HEK293 (cell line): ENCODE measurements at regions of chr17 and their contacts with region 1.

Region 1: GRCh38 chr17:58560511-58560910 is 46.1 kb upstream of the MTMR4 start:
- H3K4me3 ChIP-seq: no peak overlapping the region
- H3K27ac ChIP-seq: no peak overlapping the region
- H3K4me1 ChIP-seq: no peaks in the 10 kb centered on the region; the same call in 1 of the 2 replicates
- CTCF ChIP-seq: no peak

Region 2: DNA sequence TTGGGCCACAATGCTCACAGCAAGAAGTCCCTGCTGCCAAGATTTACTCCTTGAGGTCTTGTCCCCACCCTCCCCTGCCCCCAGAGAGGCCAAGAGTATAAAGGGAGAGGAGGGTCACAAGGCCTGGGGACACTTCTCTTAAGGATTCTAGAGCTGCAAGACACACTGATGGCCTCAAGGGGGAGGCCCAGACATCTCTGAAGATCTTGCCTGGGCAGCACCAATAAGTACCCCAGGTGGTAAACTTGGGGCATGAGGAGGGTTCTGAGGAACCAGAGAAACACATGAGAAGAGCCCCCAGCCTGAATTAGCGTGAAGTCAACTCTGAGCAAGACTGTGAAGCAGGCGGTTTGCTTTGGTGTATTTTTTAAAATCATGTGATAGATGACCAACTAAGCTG is 19.3 kb before region 1 on chr17:
- CTCF ChIA-PET with region 1: interaction called, 15 read pairs
- POLR2A ChIA-PET with region 1: no interaction called
- H3K4me3 ChIP-seq: no peak overlapping the region
- H3K27ac ChIP-seq: no peak overlapping the region
- H3K4me1 ChIP-seq: no peaks in the 10 kb centered on the region
- CTCF ChIP-seq: no peak

Region 3: GRCh38 chr17:58621174-58621573 is 60.7 kb after region 1 on chr17:
- CTCF ChIA-PET with region 1: no interaction called
- POLR2A ChIA-PET with region 1: no interaction called
- H3K4me3 ChIP-seq: no peak overlapping the region
- H3K27ac ChIP-seq: no peak overlapping the region
- H3K4me1 ChIP-seq: no peaks in the 10 kb centered on the region
- CTCF ChIP-seq: no peak